ENCODE measurements at regions of chr1 and their contacts with region 1.

Region 1: GRCh38 chr1:31944205-31945089 is 6.3 kb upstream of the PTP4A2 start:
- DNase-seq: peak; percentile 66 to 90 (median 77)
- H3K4me3 ChIP-seq: peak overlapping the region; percentile 68
- H3K4me3 Mint-ChIP-seq: peak overlapping the region; percentile 83 to 91 (median 85)
- H3K27ac ChIP-seq: peak overlapping the region; percentile 91
- H3K27ac Mint-ChIP-seq: peak overlapping the region; percentile 82 to 95 (median 92)
- H3K4me1 ChIP-seq: peaks cover 58% of the 10 kb centered on the region
- H3K4me1 Mint-ChIP-seq: peaks cover 46 to 67% (median 60%) of the 10 kb centered on the region in 3 donors
- H3K27me3 ChIP-seq: no peaks in the 10 kb centered on the region
- H3K27me3 Mint-ChIP-seq: no peaks in the 10 kb centered on the region

Region 2: GRCh38 chr1:31815752-31816500 is 128.5 kb before region 1 on chr1 and contains the start of gene SPOCD1:
- CTCF ChIA-PET with region 1: interaction called, 12 read pairs
- POLR2A ChIA-PET with region 1: interaction called, 4 read pairs
- DNase-seq: peak; percentile 70 to 86 (median 78)
- H3K4me3 ChIP-seq: no peak within 1 kb of the TSS
- H3K4me3 Mint-ChIP-seq: peak within 1 kb of the TSS in 2 of 7 donors; percentile 23 to 71
- H3K27ac ChIP-seq: no peak within 1 kb of the TSS
- H3K27ac Mint-ChIP-seq: peak within 1 kb of the TSS in 4 of 8 donors; percentile 29 to 87 (median 56)
- H3K4me1 ChIP-seq: peaks cover 6% of the 10 kb centered on the region
- H3K4me1 Mint-ChIP-seq: peaks cover 6 to 17% (median 11%) of the 10 kb centered on the region in 3 donors
- H3K27me3 ChIP-seq: no peaks in the 10 kb centered on the region
- H3K27me3 Mint-ChIP-seq: no peaks in the 10 kb centered on the region
- total RNA-seq, gene SPOCD1: 0.18 TPM in 1 of 2 experiments, not detected in the other

Region 3: GRCh38 chr1:32386676-32387392 is 442.4 kb after region 1 on chr1:
- CTCF ChIA-PET with region 1: no interaction called
- POLR2A ChIA-PET with region 1: no interaction called
- DNase-seq: no peak
- H3K4me3 ChIP-seq: no peak overlapping the region
- H3K4me3 Mint-ChIP-seq: no peak overlapping the region
- H3K27ac ChIP-seq: no peak overlapping the region
- H3K27ac Mint-ChIP-seq: peak overlapping the region in 1 of 8 donors; percentile 29
- H3K4me1 ChIP-seq: peaks cover 16% of the 10 kb centered on the region
- H3K4me1 Mint-ChIP-seq: peaks cover 5 to 7% (median 6%) of the 10 kb centered on the region in 3 donors
- H3K27me3 ChIP-seq: no peaks in the 10 kb centered on the region
- H3K27me3 Mint-ChIP-seq: no peaks in the 10 kb centered on the region